Activated CD4-positive, alpha-beta T cell treated with anti-CD3 and anti-CD28 coated beads, Interleukin-2, amount 10 ng/mL, durations not matched to agents 7 days and 5 days (primary cell): ENCODE measurements at regions of chr16 and their contacts with region 1.

Region 1: DNA sequence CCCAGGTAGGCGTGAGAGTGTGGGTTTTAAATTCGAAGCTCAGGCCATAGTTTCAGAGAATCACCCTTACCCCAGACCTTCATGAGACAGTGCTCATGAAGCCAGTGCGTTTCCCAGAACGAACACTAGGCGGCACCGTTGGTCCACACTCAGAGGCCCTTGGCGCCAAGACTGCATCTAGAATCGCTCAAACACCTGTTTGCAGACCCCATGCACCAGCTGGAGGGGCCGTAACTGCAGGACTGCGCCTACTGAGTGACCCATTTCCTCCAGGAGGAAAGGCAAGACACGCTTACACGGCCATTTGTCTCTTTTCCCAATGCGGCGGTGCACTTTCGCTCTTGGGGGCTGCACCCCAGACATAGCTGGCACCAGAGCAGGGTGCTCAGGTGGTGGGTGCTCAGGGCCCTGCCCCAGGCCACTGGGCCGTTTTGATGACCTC is 34.0 kb downstream of the ADGRG5 start:
- DNase-seq: peak; percentile 87
- H3K4me3 Mint-ChIP-seq: no peak overlapping the region
- H3K27ac Mint-ChIP-seq: peak overlapping the region; percentile 97
- H3K4me1 Mint-ChIP-seq: peaks cover 51% of the 10 kb centered on the region
- H3K27me3 Mint-ChIP-seq: peaks cover 2% of the 10 kb centered on the region

Region 2: DNA sequence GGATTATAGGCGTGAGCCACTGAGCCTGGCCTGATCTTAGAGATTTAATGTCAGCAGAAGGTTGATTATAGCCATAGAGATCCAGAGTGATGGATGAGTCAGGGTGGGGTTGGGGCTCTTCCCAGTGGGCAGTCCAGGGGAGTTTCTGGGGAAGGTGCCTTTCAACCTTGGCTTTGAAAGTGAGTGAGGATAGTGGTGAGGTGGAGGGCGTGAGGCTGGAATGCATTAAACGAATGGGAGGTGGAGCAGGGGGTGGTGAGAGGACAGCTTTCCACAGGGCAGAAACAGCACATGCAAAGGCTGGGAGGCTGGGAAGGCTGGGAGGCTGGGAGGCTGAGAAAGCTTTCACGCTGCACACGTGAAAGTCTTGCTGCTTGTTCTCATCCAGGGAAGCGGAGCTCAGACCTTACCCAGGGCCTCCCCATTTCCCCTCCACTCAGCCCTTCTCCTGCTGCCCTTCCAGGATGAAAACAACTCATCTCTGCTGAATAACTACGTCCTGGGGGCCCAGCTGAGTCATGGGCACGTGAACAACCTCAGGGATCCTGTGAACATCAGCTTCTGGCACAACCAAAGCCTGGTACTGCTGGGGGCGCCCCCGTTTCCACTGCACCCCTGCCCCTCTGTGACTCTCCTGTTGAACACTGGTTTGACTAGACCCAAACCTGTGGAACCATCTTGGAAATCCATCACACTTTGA is 11.7 kb before region 1 on chr16:
- CTCF ChIA-PET with region 1: interaction called, 19 read pairs
- POLR2A ChIA-PET with region 1: no interaction called
- DNase-seq: no peak
- H3K4me3 Mint-ChIP-seq: no peak overlapping the region
- H3K27ac Mint-ChIP-seq: no peak overlapping the region
- H3K4me1 Mint-ChIP-seq: no peaks in the 10 kb centered on the region
- H3K27me3 Mint-ChIP-seq: no peaks in the 10 kb centered on the region

Region 3: DNA sequence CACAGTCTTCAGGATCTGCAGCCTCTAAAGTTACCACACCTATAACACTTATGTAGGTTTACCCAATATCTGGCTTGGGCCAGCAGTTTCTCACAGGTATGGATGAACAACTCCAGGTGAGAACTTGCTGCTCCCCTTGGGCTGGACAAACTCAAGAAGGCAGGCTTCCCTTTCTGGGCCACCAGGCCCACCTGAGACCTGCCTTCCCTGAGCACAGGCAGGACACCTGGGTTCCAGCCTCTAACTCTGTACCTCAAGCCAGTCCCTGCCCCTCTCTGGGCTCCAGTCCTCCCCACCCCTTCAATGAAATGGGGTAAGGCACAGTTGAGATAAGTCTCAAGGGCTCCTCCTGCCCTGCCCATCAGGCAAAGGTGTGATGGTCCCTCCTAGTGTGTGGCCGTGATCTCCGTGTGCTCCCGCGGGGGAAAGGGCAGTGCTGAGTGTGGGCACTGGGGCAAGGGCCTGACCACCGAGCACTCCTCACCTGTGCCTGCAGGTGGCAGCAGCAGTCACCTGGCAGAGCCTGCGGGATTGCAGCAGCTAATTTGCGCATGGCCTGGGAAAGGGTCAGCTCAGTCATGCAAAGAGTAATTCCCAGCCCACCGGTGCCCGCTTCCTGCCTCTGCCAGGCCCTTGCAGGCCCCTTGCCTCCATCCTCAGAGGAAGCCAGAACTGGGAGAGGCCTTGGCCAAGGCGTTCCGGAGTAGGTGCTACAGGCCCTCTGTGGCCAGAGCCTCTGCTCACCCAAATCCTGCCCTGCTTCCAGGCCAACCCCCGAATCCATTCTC is 23.8 kb after region 1 on chr16:
- CTCF ChIA-PET with region 1: interaction called, 11 read pairs
- POLR2A ChIA-PET with region 1: no interaction called
- DNase-seq: no peak
- H3K4me3 Mint-ChIP-seq: no peak overlapping the region
- H3K27ac Mint-ChIP-seq: peak overlapping the region; percentile 97
- H3K4me1 Mint-ChIP-seq: peaks cover 67% of the 10 kb centered on the region
- H3K27me3 Mint-ChIP-seq: peaks cover 5% of the 10 kb centered on the region

Region 4: DNA sequence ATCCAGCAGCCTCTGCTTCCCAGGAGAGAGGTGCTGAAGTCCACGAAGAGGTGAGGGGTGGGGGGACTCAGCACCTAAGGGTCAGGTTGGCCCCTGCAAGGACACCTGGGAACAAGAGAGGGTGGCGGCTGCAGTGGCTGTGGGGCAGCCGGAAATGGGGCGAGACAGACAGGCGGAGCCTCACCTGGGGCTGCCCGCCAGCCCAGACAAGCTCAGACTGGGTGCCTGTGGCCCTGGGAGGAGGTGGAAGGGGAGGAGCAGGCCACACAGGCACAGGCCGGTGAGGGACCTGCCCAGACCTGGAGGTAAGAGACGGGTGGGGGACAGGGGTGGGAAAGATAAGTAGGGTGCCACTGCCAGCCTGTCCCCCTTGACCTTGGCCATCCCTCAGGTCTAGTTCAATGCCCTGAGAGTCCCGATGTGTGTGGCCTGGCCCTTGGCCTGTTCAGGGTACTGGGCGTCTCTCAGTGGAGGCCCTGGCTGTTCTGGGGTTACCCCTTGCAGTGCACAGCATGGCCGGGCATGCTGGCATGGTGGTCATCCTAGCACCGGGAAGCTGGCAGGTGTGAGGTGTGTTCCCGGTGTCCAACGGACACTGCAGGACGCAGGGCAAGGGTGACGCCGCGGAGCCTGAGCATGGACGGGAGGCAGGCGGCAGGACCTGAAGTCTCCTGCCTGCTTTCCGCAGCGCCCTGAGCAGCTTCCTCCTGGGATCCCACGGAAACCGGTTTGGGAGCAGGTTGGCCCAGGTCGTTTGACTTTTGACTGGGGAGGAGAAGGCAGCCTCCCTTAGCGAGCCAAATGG is 43.6 kb after region 1 on chr16:
- CTCF ChIA-PET with region 1: no interaction called
- POLR2A ChIA-PET with region 1: no interaction called
- DNase-seq: no peak
- H3K4me3 Mint-ChIP-seq: no peak overlapping the region
- H3K27ac Mint-ChIP-seq: no peak overlapping the region
- H3K4me1 Mint-ChIP-seq: peaks cover 3% of the 10 kb centered on the region
- H3K27me3 Mint-ChIP-seq: peaks cover 3% of the 10 kb centered on the region

Region 5: GRCh38 chr16:57639172-57639887 is 62.9 kb after region 1 on chr16:
- CTCF ChIA-PET with region 1: interaction called, 34 read pairs
- POLR2A ChIA-PET with region 1: no interaction called
- DNase-seq: no peak
- H3K4me3 Mint-ChIP-seq: no peak overlapping the region
- H3K27ac Mint-ChIP-seq: no peak overlapping the region
- H3K4me1 Mint-ChIP-seq: peaks cover 6% of the 10 kb centered on the region
- H3K27me3 Mint-ChIP-seq: peaks cover 27% of the 10 kb centered on the region

Region 6: GRCh38 chr16:57653936-57654335 is 77.5 kb after region 1 on chr16:
- CTCF ChIA-PET with region 1: interaction called, 69 read pairs
- POLR2A ChIA-PET with region 1: no interaction called
- DNase-seq: no peak
- H3K4me3 Mint-ChIP-seq: no peak overlapping the region
- H3K27ac Mint-ChIP-seq: no peak overlapping the region
- H3K4me1 Mint-ChIP-seq: peaks cover 17% of the 10 kb centered on the region
- H3K27me3 Mint-ChIP-seq: no peaks in the 10 kb centered on the region

Region 7: DNA sequence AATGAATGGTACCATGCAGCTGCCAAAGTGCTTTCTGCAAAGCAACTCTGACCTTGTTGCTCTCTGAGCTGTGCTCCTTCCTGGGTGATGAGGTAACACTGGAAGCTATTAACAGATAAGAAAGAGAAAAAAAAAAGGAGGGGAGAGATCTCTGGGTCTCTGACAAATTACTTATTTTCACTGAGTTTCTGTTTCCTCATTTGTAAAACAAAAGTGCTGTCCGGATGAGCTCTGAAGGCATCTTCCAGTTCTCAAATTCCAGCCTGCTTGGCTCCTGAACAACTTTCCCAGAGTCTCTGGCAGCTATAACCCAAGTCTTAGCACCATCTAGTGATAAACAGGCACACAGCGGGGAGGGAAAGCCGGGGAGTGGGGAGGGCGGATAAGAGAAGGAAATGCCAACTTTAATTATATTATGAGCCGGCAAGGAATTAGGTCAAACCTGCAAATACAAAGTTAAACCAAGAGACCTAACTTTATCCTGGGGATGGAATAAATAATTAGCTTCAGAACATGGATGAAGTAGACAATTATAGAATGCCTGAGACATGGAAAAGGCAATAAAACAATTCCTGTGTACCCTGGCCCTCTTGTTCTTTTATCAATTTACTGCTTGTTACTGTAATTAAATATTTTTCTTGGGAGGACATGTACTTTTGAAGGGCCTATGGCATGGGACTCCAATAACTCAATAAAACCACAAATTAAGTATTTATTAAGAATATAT is 287.1 kb after region 1 on chr16:
- CTCF ChIA-PET with region 1: no interaction called
- POLR2A ChIA-PET with region 1: no interaction called
- DNase-seq: no peak
- H3K4me3 Mint-ChIP-seq: no peak overlapping the region
- H3K27ac Mint-ChIP-seq: no peak overlapping the region
- H3K4me1 Mint-ChIP-seq: no peaks in the 10 kb centered on the region
- H3K27me3 Mint-ChIP-seq: peaks cover 24% of the 10 kb centered on the region